Thyroid gland (tissue), 4 donors: ENCODE measurements at regions of chr1 and their contacts with region 1.

Region 1: DNA sequence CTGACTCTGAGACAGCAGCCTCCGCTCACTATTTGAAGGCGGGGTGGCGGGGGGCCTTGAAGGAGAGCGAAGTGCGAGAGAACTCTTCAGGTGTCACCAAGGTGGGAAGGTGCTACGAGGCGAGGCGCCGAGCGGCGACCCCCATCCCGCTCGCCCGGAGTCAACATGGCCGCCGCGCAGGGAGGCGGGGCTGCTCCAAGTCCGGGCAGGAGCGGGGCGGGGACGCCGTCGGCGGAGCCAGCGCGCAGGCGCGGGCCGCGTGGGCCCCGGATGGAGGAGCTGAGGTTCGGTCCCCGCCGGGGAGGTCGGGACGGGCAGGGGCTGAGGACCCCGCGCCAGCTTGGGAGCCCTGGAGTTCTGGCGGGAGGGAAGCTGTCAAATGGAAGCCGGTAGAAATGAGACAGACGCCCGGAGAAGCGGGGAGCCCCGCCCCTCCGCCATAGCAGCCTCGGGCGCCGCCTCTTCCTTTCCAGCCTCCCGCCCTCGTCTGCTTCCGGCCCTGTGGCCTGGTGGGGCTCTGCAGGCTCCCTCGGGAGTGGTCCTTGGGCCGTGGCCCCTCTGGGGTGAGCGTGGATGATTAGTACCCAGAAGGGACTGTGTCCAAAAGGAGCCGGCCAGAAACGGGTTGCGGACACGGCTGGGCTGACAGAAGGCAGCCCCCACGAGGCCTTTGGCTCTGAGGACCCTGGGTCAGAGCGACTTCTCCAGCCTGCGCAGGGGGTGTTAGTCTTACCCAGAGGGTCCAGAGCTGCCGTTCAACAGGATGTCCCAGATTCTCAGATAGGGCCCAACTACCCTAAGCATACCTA is at the start of gene PIGV:
- DNase-seq: peak; percentile 87 to 89
- H3K4me3 ChIP-seq: peak within 1 kb of the TSS; percentile 23 to 61 (median 55)
- H3K27ac ChIP-seq: peak within 1 kb of the TSS; percentile 93 to 100 (median 98)
- H3K4me1 ChIP-seq: peaks cover 26 to 41% of the 10 kb centered on the region in 2 donors
- H3K27me3 ChIP-seq: no peaks in the 10 kb centered on the region
- CTCF ChIP-seq: peak in 4 of 6 experiments; percentile 10 to 45 (median 24)
- POLR2A ChIP-seq: peak; percentile 19 to 89
- total RNA-seq, gene PIGV: 20.5 to 39.4 (median 27.8) TPM

Region 2: GRCh38 chr1:26602378-26602959 is 185.4 kb before region 1 on chr1:
- intact Hi-C with region 1: loop called (anchors 2 kb)
- DNase-seq: peak; percentile 20 to 24
- H3K4me3 ChIP-seq: no peak overlapping the region
- H3K27ac ChIP-seq: no peak overlapping the region
- H3K4me1 ChIP-seq: peaks cover 0 to 6% of the 10 kb centered on the region in 2 donors
- H3K27me3 ChIP-seq: no peaks in the 10 kb centered on the region
- CTCF ChIP-seq: peak; percentile 45 to 98 (median 88)
- POLR2A ChIP-seq: no peak

Region 3: GRCh38 chr1:26677306-26678115 is 110.4 kb before region 1 on chr1:
- intact Hi-C with region 1: loop called (anchors 5 kb)
- DNase-seq: peak; percentile 97 to 99
- H3K4me3 ChIP-seq: no peak overlapping the region
- H3K27ac ChIP-seq: peak overlapping the region; percentile 26 to 68 (median 56)
- H3K4me1 ChIP-seq: peaks cover 5 to 16% of the 10 kb centered on the region in 2 donors
- H3K27me3 ChIP-seq: no peaks in the 10 kb centered on the region
- CTCF ChIP-seq: peak; percentile 43 to 97 (median 85)
- POLR2A ChIP-seq: no peak

Region 4: DNA sequence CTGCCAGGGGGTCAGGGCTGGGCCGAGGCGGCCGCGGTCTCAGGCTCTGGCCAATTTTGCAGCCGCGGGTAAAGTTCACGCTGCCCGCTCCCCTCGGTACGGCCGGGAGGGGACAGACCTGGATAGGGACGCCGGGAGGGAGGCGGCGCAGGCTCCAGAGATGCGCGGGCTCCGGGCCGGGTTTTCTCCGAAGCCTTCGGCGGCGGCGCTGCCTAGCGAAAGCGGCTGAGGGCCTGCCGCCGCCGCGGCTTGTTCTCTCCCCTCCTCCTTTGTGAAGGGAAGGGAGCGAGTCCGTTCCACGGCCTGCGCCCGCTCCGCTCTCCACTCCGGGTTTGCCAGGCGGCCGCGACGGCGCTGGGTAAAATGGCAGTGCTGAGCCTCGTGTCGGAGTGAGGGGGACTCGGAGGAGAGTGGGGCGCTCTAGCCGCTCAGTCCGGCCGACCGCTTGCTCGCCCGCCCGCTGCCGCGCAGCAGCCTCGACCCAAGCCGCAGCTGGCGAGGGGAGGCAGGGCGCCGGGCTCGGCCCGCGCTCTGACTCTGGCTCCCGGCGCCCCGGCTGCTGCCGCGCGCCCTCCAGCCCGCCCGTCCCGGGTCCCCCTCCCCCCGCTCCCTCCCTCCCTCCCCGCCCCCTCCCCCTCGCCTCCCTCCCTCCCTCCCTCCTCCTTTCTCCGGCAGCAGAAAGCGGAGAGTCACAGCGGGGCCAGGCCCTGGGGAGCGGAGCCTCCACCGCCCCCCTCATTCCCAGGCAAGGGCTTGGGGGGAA is 92.4 kb before region 1 on chr1 and contains the start of gene ARID1A:
- intact Hi-C with region 1: loop called (anchors 5 kb)
- DNase-seq: peak; percentile 94 to 97
- H3K4me3 ChIP-seq: peak within 1 kb of the TSS; percentile 56 to 99 (median 68)
- H3K27ac ChIP-seq: peak within 1 kb of the TSS; percentile 86 to 97 (median 94)
- H3K4me1 ChIP-seq: peaks cover 49 to 57% of the 10 kb centered on the region in 2 donors
- H3K27me3 ChIP-seq: no peaks in the 10 kb centered on the region
- CTCF ChIP-seq: no peak
- POLR2A ChIP-seq: peak; percentile 62 to 87
- total RNA-seq, gene ARID1A: 44.1 to 97.3 (median 78.4) TPM